A673 (cell line): ENCODE measurements at regions of chr18 and their contacts with region 1.

Region 1: DNA sequence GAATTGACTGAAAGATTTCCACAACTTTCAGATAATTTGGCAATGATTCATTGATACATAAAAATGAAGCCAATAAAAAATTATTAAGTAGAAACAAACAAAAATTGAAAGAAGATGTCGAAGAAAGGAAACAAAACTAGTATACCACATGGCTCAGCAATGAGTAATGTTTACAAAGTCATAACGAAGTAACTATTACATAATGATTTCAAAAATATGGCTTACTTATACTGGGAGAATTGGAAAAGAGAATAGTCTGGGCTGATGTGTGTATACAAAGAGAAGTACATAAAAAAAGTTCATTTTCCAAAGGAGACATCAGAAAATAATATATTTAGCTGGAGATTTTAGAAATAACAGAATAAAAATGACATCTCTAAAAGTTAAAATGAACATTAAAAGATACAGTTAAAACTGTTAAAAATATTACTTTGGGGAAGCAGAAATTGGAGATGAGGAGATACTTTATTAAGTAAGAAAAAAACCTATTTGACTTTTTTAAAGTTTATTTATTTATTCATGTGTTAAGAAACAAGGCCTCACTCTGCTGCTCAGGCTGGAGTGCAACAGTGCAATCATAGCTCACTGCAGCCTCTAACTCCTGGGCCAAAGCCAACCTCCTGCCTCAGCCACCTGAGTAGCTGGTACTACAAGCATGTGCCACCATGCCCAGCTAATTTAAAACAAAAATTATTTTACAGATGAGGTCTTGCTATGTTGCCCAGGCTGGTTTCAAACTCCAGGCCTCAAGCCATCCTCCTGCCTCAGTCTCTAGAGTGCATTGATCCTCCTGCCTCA is 409.7 kb upstream of the PIK3C3 start:
- DNase-seq: no peak
- H3K4me3 ChIP-seq: no peak overlapping the region
- H3K27ac ChIP-seq: no peak overlapping the region
- H3K4me1 ChIP-seq: no peaks in the 10 kb centered on the region
- H3K27me3 ChIP-seq: no peaks in the 10 kb centered on the region
- CTCF ChIP-seq: no peak

Region 2: DNA sequence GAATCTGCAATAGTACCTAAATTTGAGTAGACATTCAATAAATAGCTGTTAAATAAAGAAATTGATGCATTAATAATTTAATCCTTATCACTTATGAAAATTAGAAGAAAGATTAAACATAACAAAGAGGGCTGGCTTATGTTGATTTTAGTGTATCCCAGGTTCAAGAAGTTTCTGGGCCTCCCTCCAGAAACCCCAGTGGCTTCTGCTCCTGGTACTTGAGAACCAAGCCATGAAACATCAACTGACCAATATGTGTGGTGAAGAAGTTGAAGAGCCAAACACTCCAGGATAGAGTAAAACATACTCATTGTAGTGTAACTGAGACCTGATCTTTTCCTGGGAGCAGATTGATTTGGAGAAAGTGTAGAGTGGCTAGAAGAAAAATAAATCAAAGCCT is 1056.0 kb before region 1 on chr18:
- CTCF ChIA-PET with region 1: no interaction called
- POLR2A ChIA-PET with region 1: no interaction called
- intact Hi-C with region 1: no loop called
- DNase-seq: no peak
- H3K4me3 ChIP-seq: no peak overlapping the region
- H3K27ac ChIP-seq: no peak overlapping the region
- H3K4me1 ChIP-seq: no peaks in the 10 kb centered on the region
- H3K27me3 ChIP-seq: no peaks in the 10 kb centered on the region
- CTCF ChIP-seq: no peak

Region 3: DNA sequence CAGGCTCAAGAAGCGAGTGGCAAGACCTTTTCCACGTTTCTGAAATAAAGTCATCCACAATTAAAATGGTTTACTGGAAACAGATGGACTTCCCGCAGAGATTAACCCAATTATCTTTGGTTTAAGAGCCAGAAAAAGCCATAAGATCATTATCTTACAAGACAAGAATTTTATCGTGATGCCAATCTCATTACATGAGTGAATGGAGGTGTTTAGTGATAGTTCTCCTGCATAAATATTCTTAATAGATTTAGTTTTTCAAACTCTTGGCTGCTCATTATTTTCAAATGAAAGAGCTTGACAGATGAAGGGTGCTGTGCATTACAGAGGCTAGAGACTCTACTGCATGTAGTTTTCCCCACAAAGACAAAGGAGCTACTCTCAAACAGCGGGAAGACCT is 618.6 kb before region 1 on chr18:
- CTCF ChIA-PET with region 1: no interaction called
- POLR2A ChIA-PET with region 1: interaction called, 14 read pairs
- intact Hi-C with region 1: no loop called
- DNase-seq: peak; percentile 12
- H3K4me3 ChIP-seq: no peak overlapping the region
- H3K27ac ChIP-seq: no peak overlapping the region
- H3K4me1 ChIP-seq: no peaks in the 10 kb centered on the region
- H3K27me3 ChIP-seq: no peaks in the 10 kb centered on the region
- CTCF ChIP-seq: no peak

Region 4: GRCh38 chr18:41513438-41513837 is 31.9 kb before region 1 on chr18:
- CTCF ChIA-PET with region 1: no interaction called
- POLR2A ChIA-PET with region 1: no interaction called
- intact Hi-C with region 1: no loop called
- DNase-seq: no peak
- H3K4me3 ChIP-seq: no peak overlapping the region
- H3K27ac ChIP-seq: no peak overlapping the region
- H3K4me1 ChIP-seq: no peaks in the 10 kb centered on the region
- H3K27me3 ChIP-seq: no peaks in the 10 kb centered on the region
- CTCF ChIP-seq: no peak

Region 5: GRCh38 chr18:41829647-41830516 is 284.6 kb after region 1 on chr18:
- CTCF ChIA-PET with region 1: no interaction called
- POLR2A ChIA-PET with region 1: no interaction called
- intact Hi-C with region 1: no loop called
- DNase-seq: no peak
- H3K4me3 ChIP-seq: no peak overlapping the region
- H3K27ac ChIP-seq: no peak overlapping the region
- H3K4me1 ChIP-seq: no peaks in the 10 kb centered on the region
- H3K27me3 ChIP-seq: peaks cover 38% of the 10 kb centered on the region
- CTCF ChIP-seq: no peak